WTC11 (cell line): ENCODE measurements at regions of chr21 and their contacts with region 1.

Region 1: GRCh38 chr21:21101911-21102310 is 103.7 kb downstream of the NCAM2 start:
- DNase-seq: peak; percentile 25
- ATAC-seq: peak; percentile 94
- H3K4me3 Mint-ChIP-seq: no peak overlapping the region
- H3K27ac Mint-ChIP-seq: no peak overlapping the region
- H3K4me1 Mint-ChIP-seq: peaks cover 19% of the 10 kb centered on the region
- H3K27me3 Mint-ChIP-seq: no peaks in the 10 kb centered on the region
- CTCF ChIP-seq: no peak

Region 2: DNA sequence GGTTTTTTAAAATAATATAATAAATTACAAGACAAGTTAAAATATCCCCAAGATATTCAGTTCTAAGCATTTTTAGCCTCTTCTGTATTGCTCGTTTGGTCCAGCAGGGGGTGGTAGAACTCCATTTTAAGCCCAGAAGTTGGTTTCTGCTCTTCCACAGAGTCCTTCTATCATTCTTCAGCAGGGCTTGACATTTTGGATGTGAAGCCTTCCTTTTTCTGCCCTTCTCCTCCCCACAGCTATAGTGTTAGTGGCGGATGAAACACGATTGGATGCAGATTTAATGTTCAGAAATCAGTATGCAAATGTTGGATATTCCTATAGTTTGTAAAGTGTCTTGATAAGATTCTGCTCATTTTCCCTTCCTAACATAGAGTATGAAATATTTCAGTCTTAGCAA is 102.3 kb before region 1 on chr21:
- CTCF ChIA-PET with region 1: interaction called, 23 read pairs
- POLR2A ChIA-PET with region 1: no interaction called
- DNase-seq: peak; percentile 48
- ATAC-seq: peak; percentile 11; the same call in 1 of the 2 replicates
- H3K4me3 Mint-ChIP-seq: no peak overlapping the region
- H3K27ac Mint-ChIP-seq: no peak overlapping the region
- H3K4me1 Mint-ChIP-seq: peaks cover 14% of the 10 kb centered on the region
- H3K27me3 Mint-ChIP-seq: peaks cover 43% of the 10 kb centered on the region
- CTCF ChIP-seq: peak; percentile 74

Region 3: GRCh38 chr21:21332492-21332891 is 230.6 kb after region 1 on chr21:
- CTCF ChIA-PET with region 1: no interaction called
- POLR2A ChIA-PET with region 1: no interaction called
- DNase-seq: no peak
- ATAC-seq: no peak
- H3K4me3 Mint-ChIP-seq: no peak overlapping the region
- H3K27ac Mint-ChIP-seq: no peak overlapping the region
- H3K4me1 Mint-ChIP-seq: peaks cover 5% of the 10 kb centered on the region
- H3K27me3 Mint-ChIP-seq: no peaks in the 10 kb centered on the region
- CTCF ChIP-seq: no peak